Heart right ventricle (tissue), 16 donors: ENCODE measurements at regions of chr19 and their contacts with region 1.

Region 1: GRCh38 chr19:1935484-1936208 is 5.3 kb upstream of the CSNK1G2 start:
- DNase-seq: no peak
- ATAC-seq: peak in 1 of 8 donors; percentile 27
- H3K4me3 ChIP-seq: no peak overlapping the region
- H3K27ac ChIP-seq: peak overlapping the region in 4 of 10 donors; percentile 23 to 59 (median 25)
- H3K4me1 ChIP-seq: peaks cover 0 to 25% (median 19%) of the 10 kb centered on the region in 9 donors
- H3K27me3 ChIP-seq: no peaks in the 10 kb centered on the region
- CTCF ChIP-seq: no peak

Region 2: GRCh38 chr19:1863726-1864480 is 71.7 kb before region 1 on chr19:
- intact Hi-C with region 1: loop called in 1 of 10 experiments (anchors 5 kb)
- DNase-seq: peak; percentile 90 to 91
- ATAC-seq: peak; percentile 82 to 87 (median 84)
- H3K4me3 ChIP-seq: peak overlapping the region; percentile 42 to 96 (median 82)
- H3K27ac ChIP-seq: peak overlapping the region; percentile 21 to 99 (median 94)
- H3K4me1 ChIP-seq: peaks cover 18 to 48% (median 36%) of the 10 kb centered on the region in 9 donors
- H3K27me3 ChIP-seq: no peaks in the 10 kb centered on the region
- CTCF ChIP-seq: no peak

Region 3: GRCh38 chr19:1875646-1876495 is 59.8 kb before region 1 on chr19:
- intact Hi-C with region 1: loop called in 1 of 10 experiments (anchors 2 kb)
- DNase-seq: peak; percentile 91 to 92
- ATAC-seq: peak; percentile 87 to 96 (median 94)
- H3K4me3 ChIP-seq: peak overlapping the region; percentile 77 to 100 (median 92)
- H3K27ac ChIP-seq: peak overlapping the region; percentile 81 to 99 (median 95)
- H3K4me1 ChIP-seq: peaks cover 26 to 67% (median 59%) of the 10 kb centered on the region in 9 donors
- H3K27me3 ChIP-seq: no peaks in the 10 kb centered on the region
- CTCF ChIP-seq: peak in 2 of 9 donors; percentile 15 to 23

Region 4: GRCh38 chr19:2016041-2016807 is 80.6 kb after region 1 on chr19:
- intact Hi-C with region 1: loop called in 2 of 10 experiments (anchors 5 kb)
- DNase-seq: peak; percentile 66 to 85
- ATAC-seq: peak; percentile 68 to 91 (median 86)
- H3K4me3 ChIP-seq: peak overlapping the region in 8 of 10 donors; percentile 4 to 49 (median 42)
- H3K27ac ChIP-seq: peak overlapping the region in 8 of 10 donors; percentile 4 to 68 (median 50)
- H3K4me1 ChIP-seq: peaks cover 4 to 24% (median 9%) of the 10 kb centered on the region in 9 donors
- H3K27me3 ChIP-seq: no peaks in the 10 kb centered on the region
- CTCF ChIP-seq: no peak

Region 5: DNA sequence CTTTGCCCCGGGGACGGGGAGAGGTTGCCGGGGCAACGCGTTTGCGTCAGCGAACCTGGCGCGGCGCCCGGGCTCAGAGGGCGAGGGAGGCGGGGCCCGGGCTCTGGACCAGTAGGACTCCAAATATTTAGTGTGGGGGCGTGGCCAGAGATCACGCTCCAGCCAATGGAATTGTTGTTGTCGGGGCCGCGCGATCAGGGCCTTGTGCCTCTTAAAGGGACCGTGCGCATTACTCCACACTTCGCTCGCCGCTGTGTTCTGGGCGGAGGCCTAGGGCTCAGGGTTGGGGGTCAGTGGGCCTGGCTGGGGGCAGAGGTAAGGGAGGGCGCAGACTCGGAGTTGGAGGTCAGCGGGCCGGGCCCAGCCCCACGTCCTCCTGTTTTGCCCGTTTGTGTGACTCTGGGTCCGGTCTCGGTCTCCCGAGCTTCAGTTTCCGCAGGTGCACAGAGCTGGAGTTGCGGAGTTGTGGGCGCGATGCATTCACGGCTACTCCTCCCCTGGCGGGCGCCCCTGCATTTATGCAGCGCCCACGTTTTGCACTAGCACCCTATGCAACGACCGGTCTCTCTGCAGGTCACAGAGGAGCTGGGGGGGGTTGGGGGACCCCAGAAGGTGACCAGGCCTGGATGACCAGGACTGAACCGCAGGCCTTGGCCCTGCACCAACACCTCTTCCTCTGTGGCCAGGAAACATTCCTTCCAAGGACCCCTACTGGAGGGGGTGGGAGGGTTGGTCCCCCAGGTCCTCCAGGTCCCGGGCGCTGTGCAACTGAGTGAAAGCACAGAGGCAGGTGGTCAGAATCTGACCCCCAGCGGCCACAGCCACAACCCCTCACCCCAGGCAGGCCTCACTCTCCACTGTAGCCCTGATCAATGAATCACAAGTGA is 126.1 kb after region 1 on chr19:
- intact Hi-C with region 1: loop called in 2 of 10 experiments (anchors 5 kb)
- DNase-seq: peak; percentile 99
- ATAC-seq: peak; percentile 84 to 94 (median 88)
- H3K4me3 ChIP-seq: peak overlapping the region; percentile 37 to 92 (median 64)
- H3K27ac ChIP-seq: peak overlapping the region; percentile 97 to 100 (median 100)
- H3K4me1 ChIP-seq: peaks cover 26 to 77% (median 53%) of the 10 kb centered on the region in 9 donors
- H3K27me3 ChIP-seq: no peaks in the 10 kb centered on the region
- CTCF ChIP-seq: peak in 3 of 9 donors; percentile 8 to 29 (median 23)

Region 6: DNA sequence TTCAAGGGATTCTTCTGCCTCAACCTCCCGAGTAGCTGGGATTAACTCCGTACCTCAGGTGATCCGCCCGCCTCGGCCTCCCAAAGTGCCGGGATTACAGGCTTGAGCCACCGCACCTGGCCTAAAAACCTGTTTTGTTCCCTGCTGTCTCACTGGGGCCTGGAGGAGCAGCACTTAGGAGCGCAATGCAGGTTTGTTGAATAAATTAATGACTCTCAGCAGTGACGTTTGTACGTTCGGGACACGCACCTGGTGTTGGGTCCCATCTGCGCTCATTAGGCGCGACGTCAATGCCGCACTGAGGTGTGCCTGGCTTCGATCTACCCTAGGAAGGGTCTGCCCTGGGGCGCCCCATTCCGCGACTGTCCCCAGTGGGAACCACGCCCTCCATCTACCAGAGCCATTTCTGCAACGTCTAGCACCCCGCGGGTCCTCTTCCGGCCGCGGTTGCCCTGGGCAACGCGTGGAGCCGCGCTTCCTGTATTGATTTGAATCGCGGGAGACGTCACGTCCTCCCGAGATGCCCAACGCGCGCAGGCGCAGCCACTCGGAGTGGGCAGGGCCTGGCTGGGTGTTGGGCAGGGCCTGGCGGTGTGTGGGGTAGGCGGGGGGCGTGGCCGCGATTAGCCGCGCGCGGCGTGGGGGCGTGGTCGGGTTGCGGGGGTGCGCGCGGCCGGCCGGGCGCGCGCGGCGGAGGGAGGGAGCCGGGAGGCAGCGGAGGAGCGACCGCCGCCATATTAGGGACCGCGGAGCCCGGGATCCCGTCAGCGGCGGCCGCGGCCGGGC is 1570.1 kb after region 1 on chr19 and contains the start of gene FZR1:
- intact Hi-C with region 1: loop called in 1 of 10 experiments (anchors 10 kb)
- DNase-seq: peak; percentile 98 to 100
- ATAC-seq: peak; percentile 96 to 98 (median 98)
- H3K4me3 ChIP-seq: peak within 1 kb of the TSS; percentile 77 to 100 (median 96)
- H3K27ac ChIP-seq: peak within 1 kb of the TSS; percentile 36 to 96 (median 88)
- H3K4me1 ChIP-seq: peaks cover 4 to 42% (median 25%) of the 10 kb centered on the region in 9 donors
- H3K27me3 ChIP-seq: no peaks in the 10 kb centered on the region
- CTCF ChIP-seq: peak in 4 of 9 donors; percentile 7 to 32 (median 17)
- total RNA-seq, gene FZR1: 21.0 to 30.8 (median 27.1) TPM